GM10248 (cell line): ENCODE measurements at regions of chr3 and their contacts with region 1.

Region 1: GRCh38 chr3:4895838-4896237 is 83.4 kb upstream of the BHLHE40 start:
- DNase-seq: no peak
- CTCF ChIP-seq: no peak

Region 2: DNA sequence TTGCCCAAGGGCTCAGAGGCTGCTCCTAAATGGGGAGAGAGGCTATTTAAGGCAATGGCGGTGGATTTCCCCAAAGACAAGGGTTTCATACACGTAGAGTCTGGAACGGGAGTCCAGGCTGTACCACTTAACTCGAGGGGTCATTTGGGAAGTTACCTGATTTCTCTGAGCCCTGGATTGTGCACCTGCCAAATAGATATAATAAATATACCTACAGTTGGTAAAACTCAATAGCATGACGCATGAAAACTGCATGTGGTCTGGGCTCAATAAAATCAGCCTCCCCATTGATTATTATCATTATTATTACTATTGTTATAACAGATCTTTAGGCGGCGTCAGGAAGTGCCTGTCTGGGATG is 404.0 kb before region 1 on chr3:
- CTCF ChIA-PET with region 1: no interaction called
- POLR2A ChIA-PET with region 1: no interaction called
- DNase-seq: no peak
- CTCF ChIP-seq: no peak

Region 3: DNA sequence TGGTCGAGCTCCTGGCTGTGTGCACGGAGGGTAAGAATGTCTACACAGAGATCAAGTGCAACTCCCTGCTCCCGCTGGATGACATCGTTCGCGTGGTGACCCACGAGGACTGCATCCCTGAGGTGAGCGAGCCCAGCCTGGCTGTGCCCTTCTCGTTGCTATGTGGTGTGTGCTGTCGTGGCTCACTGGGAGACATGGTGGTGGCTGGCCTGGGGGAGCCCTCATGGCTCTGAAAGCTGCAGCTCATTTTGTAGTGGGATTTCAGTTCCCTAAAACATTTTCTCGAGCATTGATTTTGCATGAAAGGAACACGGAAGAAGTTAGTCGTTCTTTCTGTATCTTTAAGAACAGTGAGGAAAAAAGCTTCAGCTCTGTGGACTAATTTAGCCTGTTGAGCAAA is 202.2 kb before region 1 on chr3:
- CTCF ChIA-PET with region 1: no interaction called
- POLR2A ChIA-PET with region 1: no interaction called
- DNase-seq: peak; percentile 68
- CTCF ChIP-seq: no peak

Region 4: GRCh38 chr3:4866841-4867240 is 29.0 kb before region 1 on chr3:
- CTCF ChIA-PET with region 1: interaction called, 12 read pairs
- POLR2A ChIA-PET with region 1: no interaction called
- DNase-seq: no peak
- CTCF ChIP-seq: no peak

Region 5: GRCh38 chr3:4906107-4906621 is 10.3 kb after region 1 on chr3:
- CTCF ChIA-PET with region 1: interaction called, 11 read pairs
- POLR2A ChIA-PET with region 1: no interaction called
- DNase-seq: no peak
- CTCF ChIP-seq: no peak